MCF 10A (cell line): ENCODE measurements at regions of chr15 and their contacts with region 1.

Region 1: DNA sequence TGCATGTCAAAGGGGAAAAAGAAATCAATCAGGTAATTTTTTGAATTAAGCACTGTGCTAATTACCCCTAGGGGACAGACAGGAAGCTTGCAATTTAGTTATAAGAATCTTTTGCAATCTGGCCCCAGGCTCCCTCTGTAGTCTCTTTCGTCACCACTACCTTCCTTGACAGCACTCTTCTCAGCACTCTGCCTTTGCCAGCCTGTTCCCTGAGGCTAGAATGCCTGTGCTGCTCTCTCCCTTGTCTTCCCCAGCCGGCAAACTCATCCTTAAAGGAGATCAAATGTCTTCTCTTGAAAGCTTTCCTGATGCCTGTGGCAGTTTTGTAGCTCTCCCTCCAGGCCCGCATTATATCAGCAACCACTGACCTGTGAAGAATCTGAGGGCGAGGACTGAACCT is 32.4 kb upstream of the PRTG start:
- DNase-seq: peak; percentile 83
- H3K4me3 Mint-ChIP-seq: no peak overlapping the region
- H3K27ac Mint-ChIP-seq: peak overlapping the region; percentile 39
- H3K4me1 Mint-ChIP-seq: peaks cover 7% of the 10 kb centered on the region
- H3K27me3 Mint-ChIP-seq: peaks cover 7% of the 10 kb centered on the region
- CTCF ChIP-seq: no peak

Region 2: DNA sequence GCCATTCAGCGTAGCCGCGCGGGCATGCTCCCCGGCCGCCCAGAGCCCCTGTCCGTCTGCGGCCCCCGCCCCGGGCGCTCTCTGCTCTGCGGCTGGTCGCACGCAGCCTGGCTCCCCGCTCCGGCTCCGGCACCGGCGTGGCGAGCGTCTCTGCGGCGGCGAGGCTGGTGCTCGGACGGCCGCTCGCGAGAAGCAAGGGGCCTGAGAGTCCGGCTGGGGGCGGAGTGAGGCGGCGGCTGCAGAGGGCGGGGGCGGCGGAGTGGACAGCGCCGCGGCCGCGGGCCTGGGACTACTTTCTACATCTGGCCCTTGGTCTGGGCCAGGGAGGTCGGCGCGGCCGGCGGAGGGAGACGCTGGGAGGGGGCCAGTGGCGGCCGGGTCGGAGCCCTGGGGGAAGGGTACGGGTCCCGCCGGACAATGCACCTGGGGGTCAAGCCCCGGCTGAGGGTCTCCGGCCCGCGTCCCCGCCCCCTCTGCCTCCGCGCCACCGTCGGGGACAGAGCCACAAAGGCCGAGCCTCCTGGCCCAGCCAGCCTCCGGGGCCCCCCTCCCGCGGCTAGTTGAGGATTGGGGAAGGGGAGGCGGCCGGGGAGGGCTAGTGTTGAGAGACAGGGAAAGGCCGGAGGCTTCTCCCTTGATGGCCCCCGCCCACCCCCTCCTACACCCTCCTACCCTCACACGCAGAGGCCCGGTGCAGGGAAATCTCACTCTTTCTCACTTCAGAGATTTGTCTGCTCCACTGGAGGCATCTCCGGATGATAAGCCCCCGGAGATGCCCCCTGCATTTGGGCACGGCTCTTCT is 32.2 kb before region 1 on chr15 and contains the start of gene PRTG:
- CTCF ChIA-PET with region 1: interaction called, 20 read pairs
- POLR2A ChIA-PET with region 1: interaction called, 4 read pairs
- intact Hi-C with region 1: no loop called
- DNase-seq: peak; percentile 65
- H3K4me3 Mint-ChIP-seq: no peak within 1 kb of the TSS
- H3K27ac Mint-ChIP-seq: no peak within 1 kb of the TSS
- H3K4me1 Mint-ChIP-seq: no peaks in the 10 kb centered on the region
- H3K27me3 Mint-ChIP-seq: no peaks in the 10 kb centered on the region
- CTCF ChIP-seq: no peak
- total RNA-seq, gene PRTG: 1.3 and 3.5 TPM in 2 replicates

Region 3: DNA sequence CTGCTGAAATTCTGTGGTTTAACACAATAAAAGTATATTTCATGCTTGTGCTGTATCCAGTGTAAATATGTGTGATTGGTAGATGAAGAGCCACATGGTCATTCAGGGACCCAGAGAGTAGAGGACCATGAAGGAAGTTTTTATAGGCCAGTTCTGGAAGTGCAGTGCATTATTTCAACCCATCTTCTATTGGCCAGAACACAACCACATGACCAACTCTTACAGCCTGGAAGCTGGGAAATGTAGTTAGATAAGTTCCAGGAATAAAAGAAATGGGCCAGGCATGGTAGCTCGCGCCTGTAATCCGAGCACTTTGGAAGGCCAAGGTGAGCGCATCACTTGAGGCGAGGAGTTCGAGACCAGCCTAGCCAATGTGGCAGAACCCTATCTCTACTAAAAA is 10.9 kb before region 1 on chr15:
- CTCF ChIA-PET with region 1: interaction called, 31 read pairs
- POLR2A ChIA-PET with region 1: no interaction called
- intact Hi-C with region 1: no loop called
- DNase-seq: no peak
- H3K4me3 Mint-ChIP-seq: no peak overlapping the region
- H3K27ac Mint-ChIP-seq: no peak overlapping the region
- H3K4me1 Mint-ChIP-seq: no peaks in the 10 kb centered on the region
- H3K27me3 Mint-ChIP-seq: no peaks in the 10 kb centered on the region
- CTCF ChIP-seq: no peak

Region 4: DNA sequence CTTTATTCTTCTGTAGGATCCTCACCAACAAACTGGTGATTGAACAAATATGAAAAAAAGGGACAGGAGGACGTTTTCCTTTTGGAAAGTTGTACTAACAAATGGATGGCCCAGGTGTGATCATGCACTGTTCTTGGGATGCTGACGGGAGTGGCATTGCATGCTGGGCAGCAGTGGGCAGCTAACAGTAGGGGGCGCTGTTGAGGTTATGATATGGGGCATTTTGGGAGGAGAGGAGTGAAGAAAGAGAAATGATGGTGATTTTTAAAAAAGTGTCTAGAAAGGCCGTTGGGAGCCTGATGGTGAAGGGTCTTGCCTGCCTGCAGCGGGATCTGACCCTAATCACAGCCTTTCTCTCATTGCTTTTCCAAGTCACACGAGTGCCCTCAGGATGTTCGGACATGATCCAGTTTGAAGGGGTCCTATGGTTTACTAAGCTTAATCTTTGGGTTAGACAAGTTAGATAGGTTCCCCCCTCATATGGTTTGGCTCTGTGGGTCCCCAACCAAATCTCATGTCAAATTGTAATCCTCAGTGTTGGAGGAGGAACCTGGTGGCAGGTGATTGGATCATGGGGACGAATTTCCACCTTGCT is 13.8 kb after region 1 on chr15:
- CTCF ChIA-PET with region 1: interaction called, 20 read pairs
- POLR2A ChIA-PET with region 1: interaction called, 3 read pairs
- intact Hi-C with region 1: no loop called
- DNase-seq: peak; percentile 46
- H3K4me3 Mint-ChIP-seq: no peak overlapping the region
- H3K27ac Mint-ChIP-seq: no peak overlapping the region
- H3K4me1 Mint-ChIP-seq: peaks cover 16% of the 10 kb centered on the region
- H3K27me3 Mint-ChIP-seq: no peaks in the 10 kb centered on the region
- CTCF ChIP-seq: peak; percentile 71

Region 5: DNA sequence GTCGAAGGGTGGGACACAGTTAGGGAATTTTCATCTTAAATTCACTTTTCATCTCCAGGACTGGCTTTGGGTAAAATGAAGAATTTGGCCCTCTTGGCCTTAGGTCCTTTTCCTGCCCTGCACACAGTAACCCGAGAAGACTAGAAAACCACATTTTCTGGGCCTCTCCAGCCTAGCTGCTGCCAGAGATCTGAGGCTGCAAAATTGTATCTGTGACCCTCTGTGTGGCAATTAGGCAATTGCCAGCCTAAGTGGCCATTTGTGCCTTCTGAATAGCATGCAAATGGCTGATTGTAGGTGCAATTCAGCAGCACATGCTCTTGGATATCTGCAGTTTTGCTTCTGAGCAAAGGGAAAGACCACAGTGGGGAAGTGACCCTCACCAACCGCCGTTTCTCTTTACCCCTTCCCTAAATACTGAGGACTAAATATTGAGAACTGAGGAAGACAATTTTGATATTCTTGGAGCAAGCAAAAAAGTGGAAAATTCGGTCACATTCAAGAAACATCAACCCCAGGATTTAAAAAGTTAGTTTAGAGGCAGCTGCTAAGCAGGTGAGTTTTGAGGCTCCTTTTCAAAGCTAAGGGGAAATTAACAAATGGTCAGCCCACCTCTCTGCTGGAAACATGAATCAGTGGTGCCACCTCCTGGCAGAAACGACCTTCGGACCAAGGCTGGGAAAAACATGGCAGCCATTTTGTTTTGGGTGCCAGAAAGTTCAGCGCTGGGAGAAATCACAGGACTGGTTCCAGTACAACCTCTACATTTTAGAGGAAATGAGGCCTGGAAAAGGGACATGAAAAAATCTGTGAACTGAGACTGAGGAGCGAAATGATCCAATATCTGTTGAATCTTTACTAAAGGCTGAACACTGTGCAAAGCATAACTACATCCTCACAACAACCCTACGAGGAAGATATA is 24.2 kb after region 1 on chr15:
- CTCF ChIA-PET with region 1: interaction called, 30 read pairs
- POLR2A ChIA-PET with region 1: no interaction called
- intact Hi-C with region 1: no loop called
- DNase-seq: peak; percentile 71
- H3K4me3 Mint-ChIP-seq: no peak overlapping the region
- H3K27ac Mint-ChIP-seq: no peak overlapping the region
- H3K4me1 Mint-ChIP-seq: peaks cover 13% of the 10 kb centered on the region
- H3K27me3 Mint-ChIP-seq: no peaks in the 10 kb centered on the region
- CTCF ChIP-seq: peak; percentile 65